ENCODE measurements at regions of chr14 and their contacts with region 1.

Region 1: GRCh38 chr14:20327005-20327869 is 5.8 kb downstream of the CCNB1IP1 start:
- DNase-seq: peak; percentile 78
- H3K4me3 Mint-ChIP-seq: no peak overlapping the region
- H3K27ac Mint-ChIP-seq: no peak overlapping the region
- H3K4me1 Mint-ChIP-seq: peaks cover 31% of the 10 kb centered on the region
- H3K27me3 Mint-ChIP-seq: no peaks in the 10 kb centered on the region
- CTCF ChIP-seq: peak; percentile 66

Region 2: DNA sequence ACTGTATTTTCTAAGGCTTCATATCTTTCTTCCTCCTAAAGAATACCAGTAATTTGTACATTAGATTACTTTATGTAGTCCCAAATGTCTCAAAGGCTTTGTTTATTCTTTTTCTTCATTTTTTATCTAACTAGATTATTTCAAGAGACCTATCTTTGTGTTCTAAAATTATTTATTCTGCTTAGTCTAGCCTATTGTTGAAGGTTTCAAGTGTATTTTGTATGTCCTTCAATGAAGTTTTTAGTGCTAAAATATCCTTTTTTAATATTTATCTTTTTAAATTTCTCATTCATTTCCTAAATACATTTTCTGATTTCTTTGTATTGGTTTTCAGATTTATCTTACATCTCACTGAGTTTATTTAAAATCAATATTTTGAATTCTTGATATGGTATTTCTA is 162.8 kb before region 1 on chr14:
- CTCF ChIA-PET with region 1: no interaction called
- POLR2A ChIA-PET with region 1: no interaction called
- intact Hi-C with region 1: no loop called
- DNase-seq: no peak
- H3K4me3 Mint-ChIP-seq: no peak overlapping the region
- H3K27ac Mint-ChIP-seq: no peak overlapping the region
- H3K4me1 Mint-ChIP-seq: no peaks in the 10 kb centered on the region
- H3K27me3 Mint-ChIP-seq: peaks cover 68% of the 10 kb centered on the region
- CTCF ChIP-seq: no peak

Region 3: GRCh38 chr14:20305265-20306078 is 21.8 kb before region 1 on chr14 and contains the start of gene TTC5:
- CTCF ChIA-PET with region 1: interaction called, 25 read pairs
- POLR2A ChIA-PET with region 1: no interaction called
- intact Hi-C with region 1: no loop called
- DNase-seq: peak; percentile 84
- H3K4me3 Mint-ChIP-seq: peak within 1 kb of the TSS; percentile 98
- H3K27ac Mint-ChIP-seq: peak within 1 kb of the TSS; percentile 92
- H3K4me1 Mint-ChIP-seq: peaks cover 16% of the 10 kb centered on the region
- H3K27me3 Mint-ChIP-seq: no peaks in the 10 kb centered on the region
- CTCF ChIP-seq: peak; percentile 79
- total RNA-seq, gene TTC5: 18.4 and 22.9 TPM in 2 replicates

Region 4: DNA sequence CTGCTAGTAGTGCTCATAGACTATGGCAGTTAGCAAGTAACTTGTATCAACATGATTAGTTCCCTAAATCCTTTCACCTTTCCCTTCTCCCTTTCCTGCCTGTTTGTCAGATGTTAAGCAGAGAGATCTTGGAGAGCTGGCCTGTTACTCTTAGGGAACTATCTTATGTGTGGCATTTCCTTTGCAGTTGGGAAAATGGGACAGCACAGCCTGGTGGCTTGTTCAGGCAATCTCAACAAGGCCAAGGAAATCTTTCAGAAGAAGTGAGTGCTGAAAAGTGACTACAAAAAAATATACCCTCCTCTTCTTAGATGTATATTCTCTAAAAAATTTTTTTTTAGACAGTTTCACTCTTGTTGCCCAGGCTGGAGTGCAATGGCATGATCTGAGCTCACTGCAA is 23.6 kb after region 1 on chr14:
- CTCF ChIA-PET with region 1: interaction called, 23 read pairs
- POLR2A ChIA-PET with region 1: interaction called, 4 read pairs
- intact Hi-C with region 1: no loop called
- DNase-seq: no peak
- H3K4me3 Mint-ChIP-seq: no peak overlapping the region
- H3K27ac Mint-ChIP-seq: no peak overlapping the region
- H3K4me1 Mint-ChIP-seq: no peaks in the 10 kb centered on the region
- H3K27me3 Mint-ChIP-seq: no peaks in the 10 kb centered on the region
- CTCF ChIP-seq: no peak

Region 5: GRCh38 chr14:20413045-20413799 is 86.0 kb after region 1 on chr14 and contains the start of gene TEP1:
- CTCF ChIA-PET with region 1: interaction called, 28 read pairs
- POLR2A ChIA-PET with region 1: interaction called, 11 read pairs
- intact Hi-C with region 1: loop called (anchors 1 kb)
- DNase-seq: peak; percentile 87
- H3K4me3 Mint-ChIP-seq: peak within 1 kb of the TSS; percentile 77
- H3K27ac Mint-ChIP-seq: peak within 1 kb of the TSS; percentile 49
- H3K4me1 Mint-ChIP-seq: peaks cover 7% of the 10 kb centered on the region
- H3K27me3 Mint-ChIP-seq: no peaks in the 10 kb centered on the region
- CTCF ChIP-seq: no peak
- total RNA-seq, gene TEP1: 20.4 and 22.7 TPM in 2 replicates

Region 6: DNA sequence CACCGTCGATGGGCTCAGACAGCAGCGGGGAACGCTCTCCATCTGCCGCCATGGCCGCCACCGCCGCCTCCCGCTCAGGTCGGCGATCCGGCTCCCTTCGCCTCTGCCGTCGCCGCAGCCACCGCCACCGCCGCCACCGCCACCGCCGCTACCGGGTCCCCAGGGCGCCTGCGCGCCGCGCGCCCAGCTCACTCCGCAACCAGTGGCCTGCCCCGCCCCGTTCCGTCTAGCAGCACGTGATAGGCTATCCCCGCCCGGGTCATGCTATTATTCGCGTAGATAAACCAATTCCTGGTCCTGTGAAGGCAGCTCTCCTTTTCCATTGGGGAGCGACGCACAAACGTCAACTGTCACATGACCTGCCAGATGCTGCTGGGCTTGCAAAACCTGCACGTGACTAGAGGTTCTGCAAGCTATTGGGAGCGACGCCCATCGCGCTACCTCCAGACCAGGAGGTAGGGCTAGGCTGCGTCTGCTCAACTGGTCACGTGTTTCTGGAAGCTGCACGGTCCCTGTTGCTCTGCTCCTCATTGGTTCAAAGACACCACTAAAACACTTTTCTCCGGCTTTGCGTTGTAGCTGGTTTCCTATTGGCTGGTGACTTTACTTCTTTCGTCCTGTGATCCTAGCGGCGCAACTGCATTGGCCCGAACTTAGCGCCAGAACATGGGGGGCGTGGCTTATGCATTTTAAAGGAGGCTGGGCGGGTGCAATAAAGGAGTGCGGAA is 134.2 kb after region 1 on chr14 and contains the start of gene PIP4P1:
- CTCF ChIA-PET with region 1: interaction called, 11 read pairs
- POLR2A ChIA-PET with region 1: interaction called, 22 read pairs
- intact Hi-C with region 1: loop called (anchors 2 kb)
- DNase-seq: peak; percentile 100
- H3K4me3 Mint-ChIP-seq: peak within 1 kb of the TSS; percentile 76
- H3K27ac Mint-ChIP-seq: peak within 1 kb of the TSS; percentile 92
- H3K4me1 Mint-ChIP-seq: peaks cover 21% of the 10 kb centered on the region
- H3K27me3 Mint-ChIP-seq: no peaks in the 10 kb centered on the region
- CTCF ChIP-seq: no peak
- total RNA-seq, gene PIP4P1: 22.5 and 34.9 TPM in 2 replicates

Region 7: DNA sequence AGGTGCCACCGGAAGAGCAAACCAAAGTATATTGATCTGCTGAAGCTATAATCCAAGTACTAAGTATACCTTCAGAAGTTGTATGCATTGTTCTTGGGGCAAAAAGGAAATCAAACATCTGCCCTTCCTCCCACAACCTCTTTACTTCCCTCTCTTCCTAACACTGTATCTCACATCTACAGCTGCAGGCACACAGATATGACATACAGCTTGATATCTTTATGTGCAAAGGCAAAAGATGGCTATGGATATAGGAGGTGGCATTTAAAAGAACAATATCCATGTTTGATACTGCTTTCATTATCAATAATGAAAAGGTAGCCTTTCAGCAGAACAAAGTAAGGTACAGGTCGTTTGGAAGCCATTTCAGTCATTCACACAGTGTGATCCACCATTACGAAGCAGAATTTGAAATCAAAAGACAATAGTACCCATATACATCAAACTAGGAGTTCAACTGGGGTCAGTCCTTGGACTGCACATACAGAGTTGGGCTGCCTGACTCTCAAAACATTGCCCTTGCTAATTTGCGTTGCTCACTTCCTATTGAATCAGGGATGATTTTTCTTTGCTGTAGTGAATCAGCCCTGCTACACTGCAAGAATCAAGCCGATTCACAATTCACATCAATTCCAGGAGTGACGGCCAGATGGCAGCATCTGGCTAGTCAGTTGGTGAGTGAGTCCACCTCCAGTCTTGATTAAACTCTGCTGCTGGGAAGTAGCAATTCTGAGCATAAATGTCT is 370.2 kb after region 1 on chr14:
- CTCF ChIA-PET with region 1: interaction called, 26 read pairs
- POLR2A ChIA-PET with region 1: no interaction called
- intact Hi-C with region 1: no loop called
- DNase-seq: peak; percentile 78
- H3K4me3 Mint-ChIP-seq: no peak overlapping the region
- H3K27ac Mint-ChIP-seq: no peak overlapping the region
- H3K4me1 Mint-ChIP-seq: no peaks in the 10 kb centered on the region
- H3K27me3 Mint-ChIP-seq: no peaks in the 10 kb centered on the region
- CTCF ChIP-seq: peak; percentile 73